Prostate gland (tissue), 2 donors: ENCODE measurements at regions of chr1 and their contacts with region 1.

Region 1: GRCh38 chr1:61453111-61453961 is 271.6 kb downstream of the TM2D1 start:
- DNase-seq: peak; percentile 84
- H3K4me3 ChIP-seq: no peak overlapping the region
- H3K27ac ChIP-seq: peak overlapping the region; percentile 49 to 59
- H3K4me1 ChIP-seq: peaks cover 12% of the 10 kb centered on the region
- H3K27me3 ChIP-seq: no peaks in the 10 kb centered on the region
- CTCF ChIP-seq: peak in 3 of 4 experiments; percentile 59 to 78 (median 74)
- POLR2A ChIP-seq: no peak

Region 2: GRCh38 chr1:60978421-60979357 is 474.6 kb before region 1 on chr1:
- intact Hi-C with region 1: loop called (anchors 5 kb)
- DNase-seq: peak; percentile 12
- H3K4me3 ChIP-seq: no peak overlapping the region
- H3K27ac ChIP-seq: no peak overlapping the region
- H3K4me1 ChIP-seq: no peaks in the 10 kb centered on the region
- H3K27me3 ChIP-seq: no peaks in the 10 kb centered on the region
- CTCF ChIP-seq: peak in 3 of 4 experiments; percentile 29 to 49 (median 43)
- POLR2A ChIP-seq: no peak

Region 3: DNA sequence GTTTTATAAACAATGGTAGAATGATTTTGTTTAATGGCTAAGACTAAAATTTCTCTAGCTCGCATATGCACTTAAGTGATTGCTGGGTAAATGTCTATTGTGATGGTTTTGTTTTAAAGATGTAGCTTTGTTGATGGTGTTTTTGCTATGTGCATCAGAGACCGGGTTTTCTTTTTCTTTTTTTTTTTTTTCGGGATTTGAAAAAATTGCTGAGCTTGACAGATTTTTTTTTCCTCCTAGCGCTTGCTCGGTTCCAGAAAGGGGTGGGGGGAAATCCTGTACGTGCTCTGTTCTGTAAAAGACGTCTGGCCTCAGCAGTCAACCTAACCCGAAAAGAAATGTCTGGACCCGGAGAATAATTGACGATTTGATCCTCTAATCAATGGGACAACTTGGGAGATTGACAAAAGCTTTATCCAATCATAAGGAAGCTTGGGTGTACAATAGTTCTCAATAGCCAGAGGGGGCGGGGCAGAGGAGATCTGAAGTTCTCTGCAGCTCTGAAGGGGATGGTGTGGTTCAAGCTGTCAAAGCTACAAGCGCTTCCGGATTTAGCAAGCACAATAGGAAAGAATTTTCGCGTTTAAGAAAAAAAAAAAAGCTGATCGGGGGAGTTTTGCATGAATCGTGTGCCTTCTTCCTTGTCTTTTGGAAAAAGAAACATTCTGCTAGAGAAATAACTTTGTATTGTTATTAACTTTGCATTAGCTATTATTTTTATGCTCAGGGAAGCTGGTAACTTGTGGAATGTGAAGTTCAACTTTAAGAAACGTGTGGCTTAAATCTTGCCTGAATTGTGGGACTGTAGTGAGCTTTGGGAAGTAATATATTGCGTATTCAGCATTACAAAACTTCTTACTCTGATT is 375.4 kb before region 1 on chr1:
- intact Hi-C with region 1: loop called (anchors 10 kb)
- DNase-seq: peak; percentile 95
- H3K4me3 ChIP-seq: peak overlapping the region; percentile 29 to 51
- H3K27ac ChIP-seq: peak overlapping the region; percentile 89 to 97
- H3K4me1 ChIP-seq: peaks cover 12% of the 10 kb centered on the region
- H3K27me3 ChIP-seq: no peaks in the 10 kb centered on the region
- CTCF ChIP-seq: peak in 1 of 4 experiments; percentile 20
- POLR2A ChIP-seq: peak; percentile 22

Region 4: GRCh38 chr1:61343734-61344420 is 109.5 kb before region 1 on chr1:
- intact Hi-C with region 1: loop called (anchors 5 kb)
- DNase-seq: no peak
- H3K4me3 ChIP-seq: no peak overlapping the region
- H3K27ac ChIP-seq: no peak overlapping the region
- H3K4me1 ChIP-seq: no peaks in the 10 kb centered on the region
- H3K27me3 ChIP-seq: no peaks in the 10 kb centered on the region
- CTCF ChIP-seq: no peak
- POLR2A ChIP-seq: no peak

Region 5: DNA sequence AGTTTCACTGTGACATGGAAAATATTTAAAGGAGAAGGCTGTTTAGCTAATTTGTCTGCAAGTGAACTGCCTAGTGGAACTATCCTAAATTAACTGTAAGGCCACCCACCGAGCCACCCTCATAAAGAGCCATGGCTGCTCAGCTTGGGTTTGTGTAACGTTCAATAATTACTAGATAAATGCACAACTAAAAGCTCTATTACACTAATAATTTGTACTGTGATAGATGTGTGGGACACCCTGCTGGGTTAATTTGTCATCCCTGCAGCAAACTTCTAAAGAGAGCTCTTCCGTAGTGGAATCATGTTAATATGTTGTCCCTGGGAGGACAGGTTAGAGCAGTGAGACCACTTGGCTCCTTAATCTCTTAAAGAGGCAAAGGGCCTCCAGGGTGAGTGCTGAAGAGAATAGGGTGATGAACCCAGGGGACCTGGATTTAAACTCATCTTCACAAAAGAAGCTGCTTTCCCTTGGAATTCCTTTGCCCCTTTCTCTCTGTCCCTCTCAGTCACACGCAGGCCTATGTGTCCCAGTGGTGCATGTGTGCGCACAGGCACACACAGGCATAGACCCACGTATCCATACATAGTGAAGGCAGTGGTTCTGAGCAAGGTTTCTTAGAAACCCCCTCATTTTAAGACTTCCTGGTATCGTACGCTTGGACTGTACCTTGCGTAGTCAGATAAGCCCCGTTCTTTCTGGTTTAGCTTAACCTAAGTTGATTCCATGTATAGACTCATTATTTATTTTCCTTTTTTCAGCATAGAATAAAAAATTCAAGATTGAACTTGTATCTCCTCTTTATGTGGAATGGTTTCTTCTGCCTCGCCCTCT is 60.7 kb before region 1 on chr1:
- intact Hi-C with region 1: loop called (anchors 5 kb)
- DNase-seq: no peak
- H3K4me3 ChIP-seq: no peak overlapping the region
- H3K27ac ChIP-seq: no peak overlapping the region
- H3K4me1 ChIP-seq: peaks cover 14% of the 10 kb centered on the region
- H3K27me3 ChIP-seq: no peaks in the 10 kb centered on the region
- CTCF ChIP-seq: no peak
- POLR2A ChIP-seq: no peak

Region 6: DNA sequence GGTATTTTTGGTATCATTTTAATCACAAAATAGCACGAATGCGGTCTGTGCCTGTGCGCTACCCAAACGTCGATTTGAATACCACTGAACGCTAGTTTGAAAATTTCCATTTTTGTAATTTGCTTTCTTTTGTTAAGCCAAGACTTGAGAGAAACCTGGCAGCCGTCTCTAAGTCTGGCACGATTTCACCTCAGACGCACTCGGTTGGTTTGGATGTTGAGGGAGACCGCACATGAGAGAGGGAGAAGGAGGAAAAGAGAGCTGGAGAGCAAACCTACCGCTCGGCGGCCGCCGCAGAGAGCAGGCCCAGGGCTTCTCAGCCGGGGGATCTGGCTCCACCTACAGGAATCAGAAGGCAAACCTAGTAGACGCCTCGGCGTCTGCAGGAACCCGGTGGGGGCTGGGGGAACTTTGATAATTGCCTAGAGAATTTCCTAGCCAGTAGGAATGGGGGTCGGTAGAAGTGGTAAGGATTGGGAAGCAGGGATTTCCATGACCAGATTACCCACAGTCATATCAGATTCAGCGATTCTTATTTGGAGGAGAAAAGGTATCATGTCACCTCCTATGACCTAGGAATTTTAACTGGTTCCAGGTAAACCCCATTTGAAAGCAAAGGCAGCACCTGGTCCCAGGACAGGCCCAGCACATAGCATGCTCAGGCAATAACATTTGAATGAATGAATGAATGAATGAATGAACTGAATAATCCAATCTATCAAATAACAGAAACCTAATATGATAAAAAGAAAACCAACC is 188.4 kb after region 1 on chr1:
- intact Hi-C with region 1: loop called (anchors 5 kb)
- DNase-seq: peak; percentile 64
- H3K4me3 ChIP-seq: peak overlapping the region in 1 of 2 donors; percentile 5
- H3K27ac ChIP-seq: peak overlapping the region; percentile 67
- H3K4me1 ChIP-seq: peaks cover 11% of the 10 kb centered on the region
- H3K27me3 ChIP-seq: no peaks in the 10 kb centered on the region
- CTCF ChIP-seq: peak; percentile 25 to 73 (median 58)
- POLR2A ChIP-seq: no peak